Activated CD4-positive, alpha-beta T cell treated with anti-CD3 and anti-CD28 coated beads for 36 hours (primary cell): ENCODE measurements at regions of chr5 and their contacts with region 1.

Region 1: DNA sequence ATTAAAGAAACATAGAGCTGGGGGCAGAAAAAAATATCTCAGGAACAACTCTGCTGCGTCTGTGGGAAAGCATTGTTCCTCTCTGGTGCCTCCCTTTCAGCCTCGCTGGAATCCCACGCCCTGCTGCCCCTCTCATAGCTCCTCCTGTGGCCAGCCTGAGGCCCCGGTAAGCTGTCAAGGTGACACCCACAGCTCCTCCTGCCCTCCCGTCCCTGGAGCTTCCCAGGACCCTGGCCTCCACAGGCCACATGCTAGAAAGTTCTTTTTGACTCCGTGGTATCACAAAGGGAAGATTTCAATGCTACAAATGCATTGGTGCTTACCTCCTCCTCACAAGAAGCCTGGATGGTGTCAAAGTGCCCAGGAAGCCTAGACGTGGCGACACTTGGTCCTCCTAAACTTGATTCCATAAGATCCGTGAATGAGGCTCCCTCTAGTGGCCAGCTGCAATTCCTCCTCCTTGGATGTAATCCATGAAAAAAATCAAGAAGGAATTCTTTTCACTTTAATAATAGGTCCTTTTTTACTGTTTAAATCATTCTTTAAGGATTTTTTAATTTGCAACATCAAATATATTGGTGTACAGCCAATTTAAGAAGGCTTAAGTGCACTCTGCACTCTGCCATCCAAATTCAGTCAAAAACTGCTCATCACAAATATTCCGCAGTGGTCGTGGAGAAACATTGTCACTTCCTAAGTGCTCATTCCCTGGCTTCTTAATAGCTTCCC is 104.9 kb downstream of the CFAP90 start:
- DNase-seq: peak; percentile 69
- ATAC-seq: no peak
- H3K4me3 Mint-ChIP-seq: no peak overlapping the region
- H3K27ac Mint-ChIP-seq: no peak overlapping the region
- H3K4me1 Mint-ChIP-seq: no peaks in the 10 kb centered on the region
- H3K27me3 Mint-ChIP-seq: peaks cover 8% of the 10 kb centered on the region

Region 2: GRCh38 chr5:7078901-7079300 is 667.1 kb before region 1 on chr5:
- CTCF ChIA-PET with region 1: no interaction called
- POLR2A ChIA-PET with region 1: no interaction called
- intact Hi-C with region 1: loop called in 1 of 2 experiments (anchors 10 kb)
- DNase-seq: peak; percentile 17
- ATAC-seq: no peak
- H3K4me3 Mint-ChIP-seq: no peak overlapping the region
- H3K27ac Mint-ChIP-seq: no peak overlapping the region
- H3K4me1 Mint-ChIP-seq: no peaks in the 10 kb centered on the region
- H3K27me3 Mint-ChIP-seq: peaks cover 3% of the 10 kb centered on the region

Region 3: GRCh38 chr5:7622498-7622897 is 123.5 kb before region 1 on chr5:
- CTCF ChIA-PET with region 1: no interaction called
- POLR2A ChIA-PET with region 1: no interaction called
- intact Hi-C with region 1: no loop called
- DNase-seq: no peak
- ATAC-seq: no peak
- H3K4me3 Mint-ChIP-seq: no peak overlapping the region
- H3K27ac Mint-ChIP-seq: no peak overlapping the region
- H3K4me1 Mint-ChIP-seq: no peaks in the 10 kb centered on the region
- H3K27me3 Mint-ChIP-seq: peaks cover 2% of the 10 kb centered on the region

Region 4: DNA sequence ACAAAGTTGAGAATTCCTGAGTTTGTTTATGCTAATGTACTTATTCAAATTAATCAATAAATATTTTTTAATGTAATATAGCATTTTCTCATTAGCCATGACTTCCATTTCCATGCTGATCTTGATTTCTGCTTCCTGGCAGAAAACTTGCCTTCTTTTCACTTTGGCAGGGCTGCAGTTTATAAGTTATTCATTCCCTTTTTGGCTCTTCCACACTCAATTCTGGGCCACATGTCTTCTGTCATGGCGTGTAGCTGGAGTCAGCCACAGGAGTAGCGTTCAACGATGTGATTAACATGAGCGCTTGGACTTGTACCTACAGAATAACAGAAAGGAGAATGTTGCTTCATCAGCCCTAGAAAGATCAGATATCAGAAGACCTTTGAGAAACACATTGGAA is 68.0 kb before region 1 on chr5:
- CTCF ChIA-PET with region 1: no interaction called
- POLR2A ChIA-PET with region 1: no interaction called
- intact Hi-C with region 1: no loop called
- DNase-seq: no peak
- ATAC-seq: no peak
- H3K4me3 Mint-ChIP-seq: no peak overlapping the region
- H3K27ac Mint-ChIP-seq: no peak overlapping the region
- H3K4me1 Mint-ChIP-seq: no peaks in the 10 kb centered on the region
- H3K27me3 Mint-ChIP-seq: no peaks in the 10 kb centered on the region